CD8-positive, alpha-beta T cell (primary cell): ENCODE measurements at regions of chr1 and their contacts with region 1.

Region 1: DNA sequence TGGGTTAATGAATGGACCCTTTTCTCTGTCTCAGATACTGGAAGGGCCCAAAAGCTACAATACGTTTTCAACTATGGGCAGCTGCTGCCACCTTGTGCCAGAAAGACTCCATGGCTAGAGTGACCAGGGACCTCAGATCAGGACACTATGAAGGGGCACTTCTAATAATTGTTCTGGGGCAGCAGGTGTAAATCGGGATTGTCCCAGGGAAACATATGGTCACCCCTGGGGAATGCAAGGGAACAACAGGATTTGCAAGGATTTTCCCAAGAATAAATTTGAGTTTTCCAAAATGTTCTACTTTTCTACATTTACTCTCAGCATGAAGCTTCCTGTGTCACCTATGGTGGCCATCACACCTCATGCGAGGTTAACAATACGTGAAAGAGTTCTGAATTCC is 12.0 kb upstream of the FCAMR start:
- DNase-seq: peak; percentile 30 to 78 (median 63)
- ATAC-seq: peak; percentile 83
- H3K4me3 ChIP-seq: no peak overlapping the region
- H3K4me3 Mint-ChIP-seq: no peak overlapping the region
- H3K27ac ChIP-seq: no peak overlapping the region
- H3K27ac Mint-ChIP-seq: no peak overlapping the region
- H3K4me1 ChIP-seq: no peaks in the 10 kb centered on the region
- H3K4me1 Mint-ChIP-seq: no peaks in the 10 kb centered on the region
- H3K27me3 ChIP-seq: no peaks in the 10 kb centered on the region
- H3K27me3 Mint-ChIP-seq: peaks cover 4% of the 10 kb centered on the region
- CTCF ChIP-seq: peak; percentile 83

Region 2: GRCh38 chr1:206537141-206537540 is 445.1 kb before region 1 on chr1:
- CTCF ChIA-PET with region 1: no interaction called
- POLR2A ChIA-PET with region 1: no interaction called
- intact Hi-C with region 1: loop called in 1 of 2 experiments (anchors 10 kb)
- DNase-seq: no peak
- ATAC-seq: no peak
- H3K4me3 ChIP-seq: no peak overlapping the region
- H3K4me3 Mint-ChIP-seq: no peak overlapping the region
- H3K27ac ChIP-seq: no peak overlapping the region
- H3K27ac Mint-ChIP-seq: no peak overlapping the region
- H3K4me1 ChIP-seq: no peaks in the 10 kb centered on the region
- H3K4me1 Mint-ChIP-seq: no peaks in the 10 kb centered on the region
- H3K27me3 ChIP-seq: no peaks in the 10 kb centered on the region
- H3K27me3 Mint-ChIP-seq: no peaks in the 10 kb centered on the region
- CTCF ChIP-seq: no peak

Region 3: GRCh38 chr1:206663832-206664652 is 318.2 kb before region 1 on chr1:
- CTCF ChIA-PET with region 1: interaction called, 28 read pairs
- POLR2A ChIA-PET with region 1: no interaction called
- intact Hi-C with region 1: loop called in 1 of 2 experiments (anchors 2 kb)
- DNase-seq: peak; percentile 46 to 83 (median 76)
- ATAC-seq: peak; percentile 94
- H3K4me3 ChIP-seq: no peak overlapping the region
- H3K4me3 Mint-ChIP-seq: no peak overlapping the region
- H3K27ac ChIP-seq: no peak overlapping the region
- H3K27ac Mint-ChIP-seq: no peak overlapping the region
- H3K4me1 ChIP-seq: peaks cover 5% of the 10 kb centered on the region
- H3K4me1 Mint-ChIP-seq: peaks cover 16% of the 10 kb centered on the region
- H3K27me3 ChIP-seq: peaks cover 0 to 7% of the 10 kb centered on the region in 2 experiments
- H3K27me3 Mint-ChIP-seq: peaks cover 21% of the 10 kb centered on the region
- CTCF ChIP-seq: peak; percentile 89

Region 4: GRCh38 chr1:206808615-206809014 is 173.6 kb before region 1 on chr1:
- CTCF ChIA-PET with region 1: interaction called, 63 read pairs
- POLR2A ChIA-PET with region 1: interaction called, 11 read pairs
- intact Hi-C with region 1: loop called (anchors 1 to 2 kb)
- DNase-seq: peak; percentile 16 to 87 (median 54)
- ATAC-seq: peak; percentile 91
- H3K4me3 ChIP-seq: no peak overlapping the region
- H3K4me3 Mint-ChIP-seq: no peak overlapping the region
- H3K27ac ChIP-seq: no peak overlapping the region
- H3K27ac Mint-ChIP-seq: peak overlapping the region; percentile 10
- H3K4me1 ChIP-seq: peaks cover 25% of the 10 kb centered on the region
- H3K4me1 Mint-ChIP-seq: peaks cover 42% of the 10 kb centered on the region
- H3K27me3 ChIP-seq: no peaks in the 10 kb centered on the region
- H3K27me3 Mint-ChIP-seq: no peaks in the 10 kb centered on the region
- CTCF ChIP-seq: peak; percentile 50

Region 5: GRCh38 chr1:206912445-206913095 is 69.6 kb before region 1 on chr1:
- CTCF ChIA-PET with region 1: interaction called, 16 read pairs
- POLR2A ChIA-PET with region 1: interaction called, 12 read pairs
- intact Hi-C with region 1: loop called in 1 of 2 experiments (anchors 2 kb)
- DNase-seq: peak in 7 of 9 experiments; percentile 37 to 85 (median 67)
- ATAC-seq: peak; percentile 48
- H3K4me3 ChIP-seq: no peak overlapping the region
- H3K4me3 Mint-ChIP-seq: peak overlapping the region; percentile 69
- H3K27ac ChIP-seq: peak overlapping the region in 1 of 2 experiments; percentile 95
- H3K27ac Mint-ChIP-seq: peak overlapping the region; percentile 97
- H3K4me1 ChIP-seq: peaks cover 94% of the 10 kb centered on the region
- H3K4me1 Mint-ChIP-seq: peaks cover 91% of the 10 kb centered on the region
- H3K27me3 ChIP-seq: no peaks in the 10 kb centered on the region
- H3K27me3 Mint-ChIP-seq: no peaks in the 10 kb centered on the region
- CTCF ChIP-seq: peak; percentile 88

Region 6: DNA sequence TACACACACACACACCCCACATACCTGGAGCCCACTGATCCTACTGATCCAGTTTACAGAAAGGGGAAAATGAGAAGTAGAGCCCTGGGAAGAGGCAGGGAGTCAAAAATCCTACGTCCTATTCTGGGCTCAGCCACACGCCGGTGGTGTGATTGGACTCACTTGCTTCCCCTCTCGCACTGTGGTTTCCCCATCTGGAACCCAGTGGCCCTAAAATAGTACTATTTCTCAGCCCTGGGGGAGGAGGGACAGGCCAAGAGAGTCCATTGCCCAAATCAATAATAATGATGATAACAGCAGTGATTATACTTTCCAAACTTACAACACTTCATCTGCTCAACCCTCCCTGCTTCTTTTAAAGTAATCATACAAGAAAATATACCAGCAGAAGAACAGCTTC is 33.0 kb before region 1 on chr1:
- CTCF ChIA-PET with region 1: interaction called, 10 read pairs
- POLR2A ChIA-PET with region 1: no interaction called
- intact Hi-C with region 1: loop called in 1 of 2 experiments (anchors 5 kb)
- DNase-seq: no peak
- ATAC-seq: no peak
- H3K4me3 ChIP-seq: no peak overlapping the region
- H3K4me3 Mint-ChIP-seq: no peak overlapping the region
- H3K27ac ChIP-seq: no peak overlapping the region
- H3K27ac Mint-ChIP-seq: no peak overlapping the region
- H3K4me1 ChIP-seq: no peaks in the 10 kb centered on the region
- H3K4me1 Mint-ChIP-seq: peaks cover 4% of the 10 kb centered on the region
- H3K27me3 ChIP-seq: no peaks in the 10 kb centered on the region
- H3K27me3 Mint-ChIP-seq: no peaks in the 10 kb centered on the region
- CTCF ChIP-seq: no peak